PC-9 (cell line): ENCODE measurements at regions of chr2 and their contacts with region 1.

Region 1: GRCh38 chr2:47029737-47030524 is 114.3 kb upstream of the MCFD2 start:
- DNase-seq: peak; percentile 90 to 98
- H3K4me3 ChIP-seq: no peak overlapping the region
- H3K27ac ChIP-seq: peak overlapping the region; percentile 99
- H3K4me1 ChIP-seq: peaks cover 88% of the 10 kb centered on the region
- H3K27me3 ChIP-seq: no peaks in the 10 kb centered on the region
- CTCF ChIP-seq: no peak

Region 2: GRCh38 chr2:47003641-47004427 is 26.1 kb before region 1 on chr2:
- CTCF ChIA-PET with region 1: no interaction called
- POLR2A ChIA-PET with region 1: no interaction called
- intact Hi-C with region 1: loop called (anchors 1 kb)
- DNase-seq: peak; percentile 70 to 75
- H3K4me3 ChIP-seq: no peak overlapping the region
- H3K27ac ChIP-seq: peak overlapping the region; percentile 26
- H3K4me1 ChIP-seq: peaks cover 24% of the 10 kb centered on the region
- H3K27me3 ChIP-seq: no peaks in the 10 kb centered on the region
- CTCF ChIP-seq: no peak

Region 3: GRCh38 chr2:47091118-47091517 is 61.2 kb after region 1 on chr2:
- CTCF ChIA-PET with region 1: no interaction called
- POLR2A ChIA-PET with region 1: interaction called, 11 read pairs
- intact Hi-C with region 1: no loop called
- DNase-seq: no peak
- H3K4me3 ChIP-seq: no peak overlapping the region
- H3K27ac ChIP-seq: no peak overlapping the region
- H3K4me1 ChIP-seq: peaks cover 24% of the 10 kb centered on the region
- H3K27me3 ChIP-seq: no peaks in the 10 kb centered on the region
- CTCF ChIP-seq: no peak